Endothelial cell of umbilical vein (primary cell): ENCODE measurements at regions of chr21 and their contacts with region 1.

Region 1: GRCh38 chr21:41879190-41879998 is at the start of gene PRDM15:
- DNase-seq: peak; percentile 46
- H3K4me3 ChIP-seq: peak within 1 kb of the TSS; percentile 57 to 94 (median 88)
- H3K27ac ChIP-seq: peak within 1 kb of the TSS; percentile 83
- H3K4me1 ChIP-seq: peaks cover 12% of the 10 kb centered on the region
- H3K27me3 ChIP-seq: no peaks in the 10 kb centered on the region
- CTCF ChIP-seq: no peak
- POLR2A ChIP-seq: peak; percentile 32
- total RNA-seq, gene PRDM15: 10.0 and 12.9 TPM in 2 replicates

Region 2: GRCh38 chr21:41933313-41934086 is 54.1 kb after region 1 on chr21:
- CTCF ChIA-PET with region 1: interaction called, 5 read pairs
- POLR2A ChIA-PET with region 1: no interaction called
- dilution Hi-C with region 1: no loop called
- intact Hi-C with region 1: loop called (anchors 5 kb)
- DNase-seq: peak; percentile 78
- H3K4me3 ChIP-seq: peak overlapping the region in 2 of 3 experiments; percentile 15 to 49
- H3K27ac ChIP-seq: peak overlapping the region; percentile 80
- H3K4me1 ChIP-seq: peaks cover 26% of the 10 kb centered on the region
- H3K27me3 ChIP-seq: no peaks in the 10 kb centered on the region
- CTCF ChIP-seq: peak; percentile 38 to 44
- POLR2A ChIP-seq: no peak